Mammary epithelial cell (primary cell): ENCODE measurements at regions of chr1 and their contacts with region 1.

Region 1: DNA sequence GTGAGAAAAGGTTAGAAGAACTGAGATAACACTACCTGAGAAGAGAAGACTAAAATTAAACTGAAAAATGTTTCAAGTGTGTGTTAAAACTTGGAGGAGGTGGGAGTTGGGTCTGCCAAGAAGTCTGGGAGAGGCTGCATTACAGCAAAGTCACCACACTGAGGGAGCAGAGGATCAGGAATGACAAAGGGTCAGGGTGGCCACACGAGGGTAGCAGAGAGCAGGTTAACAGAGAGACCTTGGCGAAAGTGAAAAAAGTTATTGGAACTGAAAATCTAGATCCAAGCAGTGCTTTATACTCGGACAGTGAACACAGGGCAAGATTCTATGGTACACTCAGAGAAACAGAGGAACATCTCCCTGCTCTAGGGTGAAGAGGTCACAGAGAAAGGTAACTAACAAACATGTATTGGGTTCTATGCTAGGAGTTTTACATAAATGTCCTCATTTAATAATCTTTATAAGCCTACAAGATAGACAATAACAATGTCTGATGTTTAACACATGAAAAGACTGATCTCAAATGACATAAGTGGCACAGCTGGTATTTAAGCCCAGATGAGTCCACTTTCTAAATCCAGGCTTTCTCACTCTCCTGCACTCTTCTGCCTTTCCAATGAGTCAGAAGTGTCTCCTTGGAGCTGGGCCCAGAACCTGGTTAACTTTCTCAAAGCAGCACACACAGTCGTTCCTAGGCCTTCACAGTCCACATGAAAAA is 10.3 kb upstream of the CADM3 start:
- DNase-seq: peak; percentile 81
- H3K4me3 ChIP-seq: no peak overlapping the region
- H3K27ac ChIP-seq: no peak overlapping the region
- H3K4me1 ChIP-seq: peaks cover 13% of the 10 kb centered on the region
- H3K27me3 ChIP-seq: peaks cover 5% of the 10 kb centered on the region
- CTCF ChIP-seq: peak; percentile 100

Region 2: GRCh38 chr1:159132271-159132881 is 28.8 kb before region 1 on chr1:
- CTCF ChIA-PET with region 1: no interaction called
- dilution Hi-C with region 1: no loop called
- in situ Hi-C with region 1: no loop called
- intact Hi-C with region 1: loop called (anchors 1 kb)
- DNase-seq: peak; percentile 30
- H3K4me3 ChIP-seq: no peak overlapping the region
- H3K27ac ChIP-seq: no peak overlapping the region
- H3K4me1 ChIP-seq: no peaks in the 10 kb centered on the region
- H3K27me3 ChIP-seq: no peaks in the 10 kb centered on the region
- CTCF ChIP-seq: peak; percentile 84 to 90

Region 3: DNA sequence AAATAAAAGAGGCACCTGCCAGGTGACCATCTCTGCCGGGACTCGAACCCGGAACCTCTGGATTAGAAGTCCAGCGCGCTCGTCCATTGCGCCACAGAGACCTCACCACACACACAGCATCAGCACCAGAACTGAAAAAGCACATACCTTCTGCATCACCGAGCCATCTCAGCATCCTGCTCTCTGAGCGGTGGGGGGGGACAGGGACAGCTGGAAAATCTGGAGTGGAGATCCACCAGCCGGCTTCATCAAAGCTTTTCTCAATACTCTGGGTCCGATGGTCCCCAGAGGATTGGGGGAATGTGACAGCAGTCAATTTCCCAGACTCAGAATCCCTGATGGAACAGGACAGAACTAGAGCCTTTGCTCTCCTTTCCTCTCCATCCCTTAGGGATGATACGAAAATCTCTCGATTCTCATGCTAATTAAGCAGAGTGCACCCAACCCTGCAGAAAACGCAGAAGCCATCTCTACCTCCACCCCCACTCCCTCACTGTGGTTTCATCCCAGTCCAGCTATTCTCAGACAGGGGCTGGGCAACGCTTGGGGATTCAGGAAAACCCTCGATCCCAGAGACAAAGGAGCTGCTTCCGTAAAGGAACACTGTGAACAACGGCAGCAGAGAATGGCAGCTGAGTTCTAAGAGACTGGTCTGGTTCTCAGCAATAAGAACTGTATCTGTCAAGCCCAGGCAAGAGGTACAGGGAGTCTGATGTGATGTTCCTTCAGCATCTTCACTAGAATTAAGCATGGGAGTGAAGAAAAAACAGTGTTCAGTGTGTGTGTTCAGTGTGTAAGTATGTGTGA is 19.4 kb before region 1 on chr1:
- CTCF ChIA-PET with region 1: interaction called, 10 read pairs
- dilution Hi-C with region 1: no loop called
- in situ Hi-C with region 1: no loop called
- intact Hi-C with region 1: loop called (anchors 1 kb)
- DNase-seq: peak; percentile 85
- H3K4me3 ChIP-seq: peak overlapping the region; percentile 23 to 47 (median 38)
- H3K27ac ChIP-seq: no peak overlapping the region
- H3K4me1 ChIP-seq: peaks cover 6% of the 10 kb centered on the region
- H3K27me3 ChIP-seq: peaks cover 3% of the 10 kb centered on the region
- CTCF ChIP-seq: no peak

Region 4: DNA sequence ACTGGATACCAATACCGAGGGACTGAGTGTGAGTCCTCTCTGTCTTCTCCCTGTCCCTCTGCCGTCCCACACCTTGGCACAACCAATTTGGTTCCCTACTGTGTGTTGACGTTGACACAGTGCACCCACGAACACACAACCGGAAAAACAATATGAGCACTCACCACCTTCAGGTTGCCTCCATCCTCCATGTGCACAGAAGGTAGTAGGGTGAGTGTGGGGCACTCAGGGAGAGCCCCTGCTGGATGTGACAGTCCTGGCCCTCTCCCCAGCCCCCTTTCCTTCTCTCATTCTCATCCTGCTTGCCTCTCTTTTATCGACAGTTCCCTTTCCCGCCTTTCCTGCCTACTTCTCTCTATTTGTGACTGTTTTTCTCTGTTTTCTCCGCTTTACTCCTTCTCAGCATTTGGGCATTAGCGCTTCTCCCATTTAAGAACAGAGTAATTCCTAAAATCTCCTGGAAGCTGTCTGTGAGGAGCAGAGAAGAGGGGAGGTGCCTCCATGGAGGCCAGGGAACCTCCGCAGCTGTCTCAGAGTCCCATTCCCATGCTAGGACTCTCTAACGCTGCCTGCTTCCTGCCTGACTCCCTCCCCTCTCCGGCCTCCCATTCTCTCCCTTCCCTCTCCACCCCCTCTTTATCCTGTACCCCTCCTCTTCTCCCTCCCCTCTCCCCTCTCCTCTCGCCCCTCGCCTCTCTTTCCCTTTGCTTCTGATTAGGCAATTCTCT is 26.7 kb after region 1 on chr1:
- CTCF ChIA-PET with region 1: no interaction called
- dilution Hi-C with region 1: no loop called
- in situ Hi-C with region 1: no loop called
- intact Hi-C with region 1: no loop called
- DNase-seq: no peak
- H3K4me3 ChIP-seq: no peak overlapping the region
- H3K27ac ChIP-seq: no peak overlapping the region
- H3K4me1 ChIP-seq: no peaks in the 10 kb centered on the region
- H3K27me3 ChIP-seq: peaks cover 5% of the 10 kb centered on the region
- CTCF ChIP-seq: no peak

Region 5: GRCh38 chr1:159197561-159198557 is 36.7 kb after region 1 on chr1:
- CTCF ChIA-PET with region 1: interaction called, 7 read pairs
- dilution Hi-C with region 1: no loop called
- in situ Hi-C with region 1: loop called in 1 of 2 experiments (anchors 5 kb)
- intact Hi-C with region 1: loop called (anchors 1 kb)
- DNase-seq: peak; percentile 54
- H3K4me3 ChIP-seq: no peak overlapping the region
- H3K27ac ChIP-seq: no peak overlapping the region
- H3K4me1 ChIP-seq: no peaks in the 10 kb centered on the region
- H3K27me3 ChIP-seq: no peaks in the 10 kb centered on the region
- CTCF ChIP-seq: peak; percentile 94

Region 6: GRCh38 chr1:159214149-159214760 is 53.1 kb after region 1 on chr1:
- CTCF ChIA-PET with region 1: interaction called, 5 read pairs
- dilution Hi-C with region 1: no loop called
- in situ Hi-C with region 1: no loop called
- intact Hi-C with region 1: loop called (anchors 1 kb)
- DNase-seq: peak; percentile 26
- H3K4me3 ChIP-seq: no peak overlapping the region
- H3K27ac ChIP-seq: no peak overlapping the region
- H3K4me1 ChIP-seq: peaks cover 3% of the 10 kb centered on the region
- H3K27me3 ChIP-seq: no peaks in the 10 kb centered on the region
- CTCF ChIP-seq: peak; percentile 93

Region 7: GRCh38 chr1:159780583-159781582 is 619.7 kb after region 1 on chr1 and contains the start of gene DUSP23:
- CTCF ChIA-PET with region 1: no interaction called
- dilution Hi-C with region 1: no loop called
- in situ Hi-C with region 1: loop called in 1 of 2 experiments (anchors 25 kb)
- intact Hi-C with region 1: loop called (anchors 1 kb)
- DNase-seq: peak; percentile 99
- H3K4me3 ChIP-seq: peak within 1 kb of the TSS; percentile 65 to 91 (median 77)
- H3K27ac ChIP-seq: no peak within 1 kb of the TSS
- H3K4me1 ChIP-seq: peaks cover 25% of the 10 kb centered on the region
- H3K27me3 ChIP-seq: no peaks in the 10 kb centered on the region
- CTCF ChIP-seq: peak; percentile 82 to 96
- total RNA-seq, gene DUSP23: 32.1 to 39.5 TPM

Region 8: DNA sequence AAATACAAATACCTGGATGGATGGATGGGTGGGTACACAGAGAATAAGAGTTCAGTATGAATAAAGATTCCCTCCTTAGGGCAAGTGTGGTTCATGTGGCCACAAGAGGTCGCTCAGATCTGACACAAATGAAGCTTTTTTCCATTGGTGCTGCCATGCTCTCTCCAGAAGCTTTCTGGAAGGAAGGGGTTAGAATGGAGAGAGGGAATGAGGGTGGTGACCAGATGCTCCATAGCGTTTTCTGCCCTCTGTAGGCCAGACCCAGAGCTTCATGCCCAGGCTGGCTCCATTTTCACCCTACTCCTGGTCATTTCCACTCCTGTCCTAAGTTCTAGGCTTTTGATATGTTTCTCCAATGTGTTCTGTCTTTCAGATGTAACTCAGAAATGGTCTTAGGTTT is 637.7 kb after region 1 on chr1:
- CTCF ChIA-PET with region 1: no interaction called
- dilution Hi-C with region 1: no loop called
- in situ Hi-C with region 1: loop called in 1 of 2 experiments (anchors 25 kb)
- intact Hi-C with region 1: loop called (anchors 1 kb)
- DNase-seq: peak; percentile 76
- H3K4me3 ChIP-seq: no peak overlapping the region
- H3K27ac ChIP-seq: no peak overlapping the region
- H3K4me1 ChIP-seq: no peaks in the 10 kb centered on the region
- H3K27me3 ChIP-seq: peaks cover 2% of the 10 kb centered on the region
- CTCF ChIP-seq: peak; percentile 80 to 82